ENCODE measurements at regions of chr12 and their contacts with region 1.

Region 1: GRCh38 chr12:119673634-119674033 is 5.7 kb downstream of the PRKAB1 start:
- DNase-seq: peak in 4 of 5 donors; percentile 45 to 63 (median 48)
- ATAC-seq: peak; percentile 61 to 89 (median 78)
- H3K4me3 ChIP-seq: no peak overlapping the region
- H3K27ac ChIP-seq: peak overlapping the region; percentile 52 to 90 (median 72)
- H3K4me1 ChIP-seq: peaks cover 0 to 51% (median 28%) of the 10 kb centered on the region in 12 donors
- H3K27me3 ChIP-seq: no peaks in the 10 kb centered on the region
- CTCF ChIP-seq: no peak
- POLR2A ChIP-seq: no peak

Region 2: DNA sequence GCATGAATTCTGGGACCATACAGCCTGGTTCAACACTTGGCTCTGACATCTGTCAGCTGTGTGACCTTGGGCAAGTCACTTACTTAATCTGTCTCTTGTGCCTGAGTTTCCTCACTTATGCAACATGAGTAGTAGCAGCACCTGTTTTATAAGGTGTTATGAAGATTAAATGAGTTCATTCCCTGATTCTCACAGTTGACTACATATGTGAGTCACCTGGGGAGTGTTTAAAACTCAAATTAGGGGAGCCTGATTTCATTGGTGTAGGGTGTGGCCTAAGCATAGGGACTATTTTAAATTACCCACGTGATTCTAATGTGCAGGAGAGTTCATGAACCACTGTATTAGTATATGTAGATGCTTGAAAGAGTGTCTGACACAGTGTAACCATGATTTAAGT is 116.8 kb before region 1 on chr12:
- intact Hi-C with region 1: no loop called
- DNase-seq: no peak
- ATAC-seq: no peak
- H3K4me3 ChIP-seq: no peak overlapping the region
- H3K27ac ChIP-seq: no peak overlapping the region
- H3K4me1 ChIP-seq: no peaks in the 10 kb centered on the region
- H3K27me3 ChIP-seq: peaks cover 0 to 5% (median 0%) of the 10 kb centered on the region in 9 donors
- CTCF ChIP-seq: no peak
- POLR2A ChIP-seq: no peak

Region 3: DNA sequence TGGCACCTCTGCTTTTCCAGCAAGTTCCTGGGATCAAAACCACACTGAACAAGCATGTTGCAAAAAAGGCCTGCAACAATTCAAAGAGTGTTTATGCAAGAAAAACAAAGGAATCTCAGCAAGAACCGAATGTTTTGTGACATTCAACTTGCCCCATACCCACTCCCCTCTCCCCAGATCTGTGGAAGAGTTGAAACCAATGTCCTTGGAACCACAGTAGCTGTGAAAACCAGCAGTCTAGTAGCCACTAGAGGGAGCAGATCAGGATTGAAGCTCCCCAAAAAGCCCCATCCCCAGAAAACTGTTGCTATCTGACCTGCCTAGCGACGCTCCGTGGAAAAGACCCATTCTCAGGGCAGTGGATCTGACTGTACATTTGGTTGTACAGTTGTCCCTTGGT is 21.4 kb after region 1 on chr12:
- intact Hi-C with region 1: loop called in 1 of 10 experiments (anchors 2 kb)
- DNase-seq: no peak
- ATAC-seq: no peak
- H3K4me3 ChIP-seq: no peak overlapping the region
- H3K27ac ChIP-seq: no peak overlapping the region
- H3K4me1 ChIP-seq: peaks cover 0 to 27% (median 19%) of the 10 kb centered on the region in 12 donors
- H3K27me3 ChIP-seq: no peaks in the 10 kb centered on the region
- CTCF ChIP-seq: peak in 8 of 12 donors; percentile 19 to 40 (median 35)
- POLR2A ChIP-seq: no peak